ENCODE measurements at regions of chr1 and their contacts with region 1.

Region 1: GRCh38 chr1:161292631-161293030 is 17.1 kb downstream of the MPZ start:
- DNase-seq: no peak
- H3K4me3 Mint-ChIP-seq: no peak overlapping the region
- H3K27ac Mint-ChIP-seq: no peak overlapping the region
- H3K4me1 Mint-ChIP-seq: no peaks in the 10 kb centered on the region
- H3K27me3 Mint-ChIP-seq: peaks cover 13% of the 10 kb centered on the region
- CTCF ChIP-seq: no peak

Region 2: DNA sequence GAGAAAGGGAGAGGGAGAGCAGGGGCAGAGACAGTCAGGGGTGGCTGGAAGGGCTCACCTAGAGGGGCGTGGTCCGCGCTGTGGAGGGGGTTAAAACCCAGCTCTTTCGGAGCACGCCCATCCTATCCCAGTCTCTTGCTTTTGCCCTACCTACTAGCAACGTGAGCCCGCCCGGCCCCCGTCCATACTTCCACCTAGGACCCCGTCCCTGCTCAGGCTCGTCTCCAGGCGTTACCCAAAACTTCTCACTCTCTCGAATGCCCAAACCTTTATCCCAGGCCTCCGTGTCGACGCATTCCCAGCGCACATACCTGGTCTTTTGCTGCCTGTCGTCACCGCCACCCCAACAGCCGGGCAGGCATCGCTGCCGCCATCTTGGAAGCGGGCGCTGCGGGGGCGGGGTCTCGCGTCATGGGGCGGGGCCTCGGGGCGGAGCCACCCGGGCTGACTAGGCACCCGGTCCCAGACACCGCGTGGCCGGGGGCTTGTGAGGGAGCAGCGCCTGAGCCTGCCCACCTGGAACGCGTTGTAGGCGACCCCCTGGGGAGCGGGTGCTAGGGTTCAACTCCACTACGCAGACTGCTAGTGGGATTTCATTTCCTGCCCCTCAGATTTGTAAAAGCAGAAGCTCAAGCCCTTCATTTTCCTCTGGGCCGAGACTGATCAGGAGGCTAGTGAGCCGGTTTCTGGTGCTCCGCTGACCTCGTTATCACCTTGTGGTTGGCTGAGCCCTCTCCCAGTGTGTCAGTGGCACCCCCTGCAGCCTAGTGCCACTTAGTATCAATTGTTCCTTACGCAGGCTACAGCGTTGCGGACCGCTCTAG is 115.3 kb before region 1 on chr1 and contains the start of gene B4GALT3:
- CTCF ChIA-PET with region 1: interaction called, 9 read pairs
- POLR2A ChIA-PET with region 1: no interaction called
- intact Hi-C with region 1: loop called (anchors 1 kb)
- DNase-seq: peak; percentile 87
- H3K4me3 Mint-ChIP-seq: peak within 1 kb of the TSS; percentile 86
- H3K27ac Mint-ChIP-seq: peak within 1 kb of the TSS; percentile 92
- H3K4me1 Mint-ChIP-seq: peaks cover 37% of the 10 kb centered on the region
- H3K27me3 Mint-ChIP-seq: no peaks in the 10 kb centered on the region
- CTCF ChIP-seq: no peak
- total RNA-seq, gene B4GALT3: 50.0 and 51.7 TPM in 2 replicates

Region 3: DNA sequence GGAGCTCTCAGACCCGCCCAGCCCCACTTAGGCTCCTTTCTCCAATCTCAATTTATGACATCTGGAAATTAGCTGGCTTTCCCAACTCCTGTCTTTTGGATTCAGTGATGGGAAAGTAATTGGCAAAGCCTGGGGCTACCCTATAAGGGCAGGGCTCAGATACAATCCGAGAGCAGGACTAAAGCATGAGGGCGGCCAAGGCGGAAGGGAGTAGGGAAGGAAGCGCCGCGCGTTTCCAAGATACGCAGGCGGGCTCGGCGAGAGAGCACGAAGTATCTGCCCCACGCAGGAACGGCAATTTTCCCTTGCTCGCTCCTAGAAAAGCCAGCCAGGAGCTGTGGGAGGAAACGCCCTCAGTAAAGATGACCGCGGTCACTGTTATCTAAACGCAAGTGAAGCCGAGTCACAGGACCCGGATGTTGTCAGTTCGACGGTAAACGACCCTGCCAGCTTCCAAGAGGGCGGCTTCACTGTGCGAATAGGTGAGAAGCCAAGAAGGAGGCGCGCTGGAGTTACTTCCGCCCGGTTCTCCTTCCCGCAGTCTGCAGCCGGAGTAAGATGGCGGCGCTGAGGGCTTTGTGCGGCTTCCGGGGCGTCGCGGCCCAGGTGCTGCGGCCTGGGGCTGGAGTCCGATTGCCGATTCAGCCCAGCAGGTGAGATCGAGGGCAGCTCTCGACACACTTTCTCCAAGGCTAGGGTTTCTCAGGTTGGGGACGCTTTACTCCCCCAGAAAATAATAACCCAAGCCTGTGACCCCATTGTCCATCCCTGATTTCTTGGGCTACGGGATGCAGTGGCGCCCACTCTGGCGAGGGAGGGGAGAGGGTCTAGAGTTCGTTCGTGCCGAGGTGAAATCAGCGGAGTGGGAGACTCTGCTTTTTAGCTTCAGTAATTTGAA is 90.6 kb before region 1 on chr1 and contains the start of gene NDUFS2:
- CTCF ChIA-PET with region 1: interaction called, 108 read pairs
- POLR2A ChIA-PET with region 1: interaction called, 6 read pairs
- intact Hi-C with region 1: no loop called
- DNase-seq: peak; percentile 100
- H3K4me3 Mint-ChIP-seq: peak within 1 kb of the TSS; percentile 85
- H3K27ac Mint-ChIP-seq: peak within 1 kb of the TSS; percentile 96
- H3K4me1 Mint-ChIP-seq: peaks cover 66% of the 10 kb centered on the region
- H3K27me3 Mint-ChIP-seq: no peaks in the 10 kb centered on the region
- CTCF ChIP-seq: no peak
- total RNA-seq, gene NDUFS2: 139 and 149 TPM in 2 replicates

Region 4: GRCh38 chr1:161250829-161251228 is 41.8 kb before region 1 on chr1:
- CTCF ChIA-PET with region 1: interaction called, 34 read pairs
- POLR2A ChIA-PET with region 1: interaction called, 4 read pairs
- intact Hi-C with region 1: no loop called
- DNase-seq: no peak
- H3K4me3 Mint-ChIP-seq: no peak overlapping the region
- H3K27ac Mint-ChIP-seq: no peak overlapping the region
- H3K4me1 Mint-ChIP-seq: no peaks in the 10 kb centered on the region
- H3K27me3 Mint-ChIP-seq: no peaks in the 10 kb centered on the region
- CTCF ChIP-seq: no peak

Region 5: DNA sequence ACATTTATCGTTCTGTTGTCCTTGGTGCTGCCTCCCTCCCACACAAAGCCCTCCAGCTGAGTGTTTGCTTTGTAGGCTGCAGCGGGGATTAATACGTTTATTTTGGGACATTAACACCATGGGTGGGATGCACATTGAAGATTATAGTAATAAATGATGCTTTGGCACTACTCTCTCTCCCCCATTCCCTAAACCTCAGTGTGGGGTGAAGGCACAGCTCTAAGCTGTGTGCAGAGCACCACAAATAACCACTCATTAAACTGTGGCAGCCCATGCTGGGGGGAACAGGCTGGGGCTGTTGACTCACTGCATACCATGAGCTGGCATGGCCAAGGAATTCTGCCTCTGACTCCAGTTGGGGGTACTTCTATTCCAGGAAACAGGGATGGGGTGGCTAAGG is 26.4 kb before region 1 on chr1:
- CTCF ChIA-PET with region 1: interaction called, 17 read pairs
- POLR2A ChIA-PET with region 1: no interaction called
- intact Hi-C with region 1: no loop called
- DNase-seq: no peak
- H3K4me3 Mint-ChIP-seq: no peak overlapping the region
- H3K27ac Mint-ChIP-seq: no peak overlapping the region
- H3K4me1 Mint-ChIP-seq: no peaks in the 10 kb centered on the region
- H3K27me3 Mint-ChIP-seq: peaks cover 14% of the 10 kb centered on the region
- CTCF ChIP-seq: no peak

Region 6: GRCh38 chr1:161305867-161306519 is 13.4 kb after region 1 on chr1:
- CTCF ChIA-PET with region 1: interaction called, 89 read pairs
- POLR2A ChIA-PET with region 1: interaction called, 4 read pairs
- intact Hi-C with region 1: no loop called
- DNase-seq: no peak
- H3K4me3 Mint-ChIP-seq: no peak overlapping the region
- H3K27ac Mint-ChIP-seq: no peak overlapping the region
- H3K4me1 Mint-ChIP-seq: peaks cover 12% of the 10 kb centered on the region
- H3K27me3 Mint-ChIP-seq: no peaks in the 10 kb centered on the region
- CTCF ChIP-seq: no peak

Region 7: DNA sequence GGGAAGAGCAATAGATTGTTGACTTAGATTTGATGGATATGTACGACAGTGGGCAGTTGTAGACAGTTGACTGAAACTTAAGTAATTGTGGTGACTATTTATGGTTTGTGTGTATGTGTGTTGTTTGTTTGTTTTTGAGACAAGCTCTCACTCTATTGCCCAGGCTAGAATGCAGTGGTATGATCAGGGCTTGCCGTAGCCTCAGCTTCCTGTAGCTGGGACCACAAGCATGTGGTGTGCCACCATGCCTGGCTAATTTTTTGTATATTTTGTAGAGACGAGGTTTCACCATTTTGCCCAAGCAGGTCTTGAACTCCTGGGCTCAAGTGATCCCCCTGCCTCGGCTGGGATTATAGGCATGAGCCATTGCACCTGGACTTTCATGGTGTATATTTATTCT is 31.4 kb after region 1 on chr1:
- CTCF ChIA-PET with region 1: interaction called, 11 read pairs
- POLR2A ChIA-PET with region 1: no interaction called
- intact Hi-C with region 1: no loop called
- DNase-seq: no peak
- H3K4me3 Mint-ChIP-seq: no peak overlapping the region
- H3K27ac Mint-ChIP-seq: no peak overlapping the region
- H3K4me1 Mint-ChIP-seq: no peaks in the 10 kb centered on the region
- H3K27me3 Mint-ChIP-seq: no peaks in the 10 kb centered on the region
- CTCF ChIP-seq: no peak

Measured in MCF 10A (cell line).